Calu3 (cell line): ENCODE measurements at regions of chr19 and their contacts with region 1.

Region 1: GRCh38 chr19:49200238-49200862 is 42.8 kb downstream of the TRPM4 start:
- DNase-seq: no peak
- H3K4me3 Mint-ChIP-seq: no peak overlapping the region
- H3K27ac Mint-ChIP-seq: no peak overlapping the region
- H3K4me1 Mint-ChIP-seq: peaks cover 7% of the 10 kb centered on the region
- H3K27me3 Mint-ChIP-seq: no peaks in the 10 kb centered on the region
- CTCF ChIP-seq: no peak

Region 2: DNA sequence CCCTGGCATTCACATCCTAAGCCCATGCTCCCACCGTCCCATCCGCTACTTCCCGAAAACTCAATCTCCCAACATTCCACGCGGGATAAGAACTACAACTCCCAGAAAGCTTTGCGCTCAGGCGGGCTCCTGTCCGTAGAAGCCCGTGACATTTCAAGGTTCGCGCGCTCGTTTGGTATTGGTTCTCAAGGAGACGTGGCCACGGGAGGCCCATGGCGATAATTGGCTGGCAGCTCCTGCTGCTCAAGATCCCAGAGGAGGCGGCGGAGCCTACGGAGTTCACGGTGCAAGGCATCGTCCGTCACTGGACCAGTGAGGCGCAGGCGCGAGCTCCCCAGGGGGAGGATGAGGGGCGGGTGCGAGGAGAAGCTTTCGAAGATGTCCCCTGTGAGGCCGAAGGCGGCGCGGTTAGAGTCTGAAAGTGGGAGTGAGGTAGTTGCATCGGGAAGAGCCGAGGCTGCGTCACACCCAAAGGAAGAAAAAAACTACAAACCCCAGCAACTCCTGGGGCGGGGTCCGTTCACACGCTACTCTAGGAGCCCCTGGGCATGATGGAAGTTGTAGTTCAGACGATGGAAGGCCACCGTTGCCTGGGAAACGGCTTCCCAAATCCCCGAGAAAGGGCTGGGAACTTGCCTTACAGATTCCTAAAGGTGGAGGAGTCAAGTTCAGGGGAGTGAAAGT is 479.6 kb before region 1 on chr19:
- CTCF ChIA-PET with region 1: no interaction called
- intact Hi-C with region 1: no loop called
- DNase-seq: peak; percentile 97
- H3K4me3 Mint-ChIP-seq: peak overlapping the region; percentile 99
- H3K27ac Mint-ChIP-seq: peak overlapping the region; percentile 96
- H3K4me1 Mint-ChIP-seq: peaks cover 9% of the 10 kb centered on the region
- H3K27me3 Mint-ChIP-seq: peaks cover 13% of the 10 kb centered on the region
- CTCF ChIP-seq: no peak

Region 3: DNA sequence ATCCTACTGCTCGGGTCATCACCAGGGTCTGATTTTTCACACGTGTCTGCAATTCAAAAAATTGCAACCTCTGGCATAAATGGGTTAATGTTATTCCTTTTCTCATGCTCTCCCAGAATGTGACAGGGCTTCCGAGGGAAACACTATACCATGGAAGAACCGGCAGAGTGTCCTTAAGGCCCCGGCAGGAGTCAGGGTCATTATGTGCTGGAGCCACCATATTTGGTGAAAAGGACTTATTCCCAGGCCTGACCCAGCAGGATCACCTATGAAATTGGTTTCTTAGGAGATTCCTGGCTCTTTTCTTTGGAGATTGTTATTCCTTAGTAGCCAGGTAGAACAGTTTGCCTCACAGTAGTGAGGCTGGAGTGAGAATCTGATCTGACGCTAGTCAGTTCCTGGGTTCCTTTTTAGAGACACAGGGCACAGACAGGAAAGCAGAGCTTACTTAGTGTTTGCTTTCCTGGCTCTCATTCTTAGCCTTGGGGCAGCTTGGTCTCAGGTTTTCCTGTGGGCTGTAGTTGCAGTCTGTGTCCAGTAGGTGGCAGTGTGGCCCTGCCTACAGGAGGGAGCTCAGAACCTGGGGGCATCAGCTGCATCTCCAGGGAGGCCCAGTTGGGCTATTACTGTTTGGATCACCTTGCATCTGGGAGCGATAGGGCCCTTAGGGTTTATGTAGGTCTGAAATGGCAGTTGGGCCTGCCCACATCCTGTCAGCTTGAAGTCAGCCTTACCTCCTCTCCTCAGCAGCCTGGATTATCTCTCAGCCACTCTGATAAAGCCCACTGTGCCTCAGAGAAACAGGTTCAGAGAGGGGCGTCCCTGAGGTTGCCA is 102.7 kb before region 1 on chr19:
- CTCF ChIA-PET with region 1: interaction called, 85 read pairs
- intact Hi-C with region 1: loop called (anchors 5 kb)
- DNase-seq: peak; percentile 85
- H3K4me3 Mint-ChIP-seq: no peak overlapping the region
- H3K27ac Mint-ChIP-seq: no peak overlapping the region
- H3K4me1 Mint-ChIP-seq: peaks cover 7% of the 10 kb centered on the region
- H3K27me3 Mint-ChIP-seq: no peaks in the 10 kb centered on the region
- CTCF ChIP-seq: peak; percentile 99

Region 4: DNA sequence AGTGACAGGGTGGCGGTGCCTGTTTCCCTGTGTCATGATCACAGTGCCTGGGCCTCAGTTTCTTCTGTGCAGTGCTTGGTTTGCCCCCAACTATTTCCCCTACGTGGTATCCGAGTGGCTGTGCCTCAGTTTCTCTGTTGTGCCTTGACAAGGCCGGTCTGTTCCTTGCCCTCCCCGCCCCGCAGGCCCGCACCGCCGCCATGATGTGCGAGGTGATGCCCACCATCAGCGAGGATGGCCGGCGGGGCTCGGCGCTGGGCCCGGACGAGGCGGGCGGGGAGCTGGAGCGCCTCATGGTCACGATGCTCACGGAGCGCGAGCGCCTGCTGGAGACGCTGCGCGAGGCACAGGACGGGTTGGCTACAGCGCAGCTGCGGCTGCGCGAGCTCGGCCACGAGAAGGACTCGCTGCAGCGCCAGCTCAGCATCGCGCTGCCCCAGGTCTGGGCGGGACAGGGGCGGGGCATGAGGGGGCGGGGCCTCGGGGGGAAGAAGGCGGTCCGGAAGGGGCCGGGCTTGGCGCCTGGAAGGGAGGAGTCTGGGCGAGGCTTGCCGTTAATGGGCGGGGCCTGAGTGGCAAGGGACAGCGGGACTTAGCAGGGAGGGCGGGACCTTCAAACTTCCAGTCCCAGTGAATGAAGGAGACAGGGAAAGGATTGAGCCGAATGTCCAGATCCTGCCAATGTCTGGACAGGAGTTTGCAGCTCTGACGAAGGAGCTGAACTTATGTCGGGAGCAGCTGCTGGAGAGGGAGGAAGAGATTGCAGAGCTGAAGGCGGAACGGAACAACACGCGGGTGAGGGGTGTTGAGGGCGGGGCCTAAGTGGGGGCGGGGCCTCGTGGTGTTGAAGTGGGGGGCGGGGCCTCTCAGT is 72.4 kb before region 1 on chr19:
- CTCF ChIA-PET with region 1: interaction called, 12 read pairs
- intact Hi-C with region 1: no loop called
- DNase-seq: peak; percentile 99
- H3K4me3 Mint-ChIP-seq: peak overlapping the region; percentile 60
- H3K27ac Mint-ChIP-seq: peak overlapping the region; percentile 55
- H3K4me1 Mint-ChIP-seq: peaks cover 13% of the 10 kb centered on the region
- H3K27me3 Mint-ChIP-seq: peaks cover under 1% of the 10 kb centered on the region
- CTCF ChIP-seq: peak; percentile 24

Region 5: DNA sequence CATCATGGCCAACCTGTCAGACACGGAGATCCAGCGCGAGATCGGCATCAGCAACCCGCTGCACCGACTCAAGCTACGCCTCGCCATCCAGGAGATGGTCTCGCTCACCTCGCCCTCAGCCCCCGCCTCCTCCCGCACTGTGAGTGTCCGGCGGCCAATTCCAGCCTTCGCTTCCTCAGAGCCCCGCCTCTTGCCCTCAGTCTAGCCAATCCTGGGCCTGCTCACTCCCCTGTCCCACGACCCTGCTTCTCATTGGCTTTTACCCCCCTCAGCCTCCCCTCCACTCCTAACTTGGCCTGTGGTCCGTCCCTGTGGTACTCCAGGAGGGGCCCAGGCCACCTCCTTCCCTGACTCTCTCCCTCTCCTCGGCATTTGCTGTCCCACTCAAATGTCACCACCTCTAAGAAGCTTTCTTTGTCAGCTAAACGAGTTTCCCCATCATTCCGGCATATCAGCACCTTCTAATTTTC is 57.4 kb before region 1 on chr19:
- CTCF ChIA-PET with region 1: interaction called, 11 read pairs
- intact Hi-C with region 1: no loop called
- DNase-seq: peak; percentile 94
- H3K4me3 Mint-ChIP-seq: peak overlapping the region; percentile 71
- H3K27ac Mint-ChIP-seq: peak overlapping the region; percentile 21
- H3K4me1 Mint-ChIP-seq: peaks cover 21% of the 10 kb centered on the region
- H3K27me3 Mint-ChIP-seq: peaks cover 36% of the 10 kb centered on the region
- CTCF ChIP-seq: no peak

Region 6: GRCh38 chr19:49165111-49165750 is 35.1 kb before region 1 on chr19:
- CTCF ChIA-PET with region 1: interaction called, 13 read pairs
- intact Hi-C with region 1: no loop called
- DNase-seq: no peak
- H3K4me3 Mint-ChIP-seq: no peak overlapping the region
- H3K27ac Mint-ChIP-seq: no peak overlapping the region
- H3K4me1 Mint-ChIP-seq: peaks cover 10% of the 10 kb centered on the region
- H3K27me3 Mint-ChIP-seq: no peaks in the 10 kb centered on the region
- CTCF ChIP-seq: no peak

Region 7: DNA sequence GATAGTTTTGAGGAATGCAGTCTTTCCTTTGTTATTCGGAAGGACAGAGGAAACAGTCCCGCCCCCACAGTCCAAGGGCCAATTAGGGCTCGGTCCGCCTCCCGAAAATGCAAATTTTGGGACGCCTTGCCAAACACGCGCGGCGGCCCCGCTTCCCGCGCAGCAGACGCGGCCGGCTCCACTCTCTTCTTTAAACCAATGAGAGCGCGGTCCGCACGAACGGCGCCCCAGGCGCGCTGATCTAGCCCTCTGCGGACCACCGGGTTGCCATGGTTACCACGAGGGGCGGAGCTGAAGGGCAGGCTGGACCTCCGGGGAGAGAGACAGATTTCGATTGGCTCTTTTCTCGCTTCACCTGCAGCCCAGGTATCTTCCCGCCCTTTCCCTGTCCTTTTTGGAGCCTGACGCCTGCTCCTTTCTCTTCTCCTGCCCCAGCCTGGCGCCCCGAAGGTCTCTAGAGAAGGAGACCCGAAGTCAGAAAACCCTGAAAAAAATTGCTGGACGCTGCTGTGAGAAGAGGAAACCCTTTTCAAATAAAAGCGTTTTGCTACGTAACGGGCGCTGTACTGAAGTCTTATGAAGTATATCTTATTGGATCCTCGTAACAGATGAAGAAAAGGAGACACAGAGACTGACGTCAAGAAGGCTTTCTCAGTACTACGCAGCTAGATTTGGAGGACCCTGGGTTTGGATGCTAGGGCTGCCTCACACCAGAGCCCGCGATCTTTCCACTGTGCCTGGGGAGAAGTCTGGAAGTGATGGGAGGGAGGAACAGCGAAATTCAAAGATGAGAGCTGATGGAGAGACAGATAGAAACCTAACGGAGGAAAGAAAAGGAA is 220.9 kb after region 1 on chr19:
- CTCF ChIA-PET with region 1: no interaction called
- intact Hi-C with region 1: no loop called
- DNase-seq: no peak
- H3K4me3 Mint-ChIP-seq: no peak overlapping the region
- H3K27ac Mint-ChIP-seq: no peak overlapping the region
- H3K4me1 Mint-ChIP-seq: peaks cover 30% of the 10 kb centered on the region
- H3K27me3 Mint-ChIP-seq: peaks cover 100% of the 10 kb centered on the region
- CTCF ChIP-seq: no peak